Posterior cingulate gyrus (tissue), 11 donors: ENCODE measurements at regions of chr10 and their contacts with region 1.

Region 1: GRCh38 chr10:784403-785088 is 95.1 kb upstream of the DIP2C start:
- DNase-seq: peak; percentile 45 to 97 (median 82)

Region 2: DNA sequence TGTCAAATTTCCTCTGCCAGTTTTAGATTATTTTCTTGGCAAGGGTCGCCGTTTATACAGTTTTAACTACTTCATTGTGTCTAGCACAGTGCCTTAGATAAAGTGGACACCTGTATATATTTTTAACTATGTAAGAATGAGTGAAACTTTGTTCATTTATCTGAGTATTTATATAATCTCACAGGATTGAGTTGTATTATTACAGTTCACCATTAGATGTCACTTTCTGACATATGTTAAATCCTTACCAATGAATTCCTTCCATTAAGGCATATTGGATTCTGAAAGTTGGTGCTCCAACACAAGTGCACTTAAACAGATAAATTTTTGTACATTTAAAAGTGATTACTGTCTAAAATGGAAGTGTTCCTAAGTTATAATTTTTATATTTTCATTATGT is 606.3 kb before region 1 on chr10:
- intact Hi-C with region 1: loop called (anchors 2 kb)
- DNase-seq: no peak

Region 3: GRCh38 chr10:451021-451471 is 333.5 kb before region 1 on chr10:
- intact Hi-C with region 1: loop called (anchors 10 kb)
- DNase-seq: no peak